Breast epithelium (tissue), 4 donors: ENCODE measurements at regions of chr4 and their contacts with region 1.

Region 1: DNA sequence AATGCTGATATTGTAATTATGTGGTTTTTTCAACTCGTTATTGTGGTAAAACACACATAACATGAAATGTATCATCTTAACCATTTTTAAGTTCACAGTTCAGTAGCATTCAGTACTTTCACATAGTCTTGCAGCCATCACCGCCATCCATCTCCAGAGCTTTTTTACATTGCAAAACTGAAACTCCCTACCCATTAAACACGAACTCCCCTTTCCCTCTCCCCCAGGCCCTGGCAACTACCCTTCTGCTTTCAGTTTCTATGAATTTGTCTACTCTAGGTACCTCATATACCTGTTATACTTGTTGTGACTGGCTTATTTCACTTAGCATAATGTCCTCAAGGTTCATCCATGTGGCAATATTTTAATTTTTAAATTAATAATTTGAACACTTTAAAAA is 380.6 kb downstream of the MAPK10 start:
- DNase-seq: no peak
- H3K4me3 ChIP-seq: no peak overlapping the region
- H3K27ac ChIP-seq: no peak overlapping the region
- H3K4me1 ChIP-seq: no peaks in the 10 kb centered on the region
- H3K27me3 ChIP-seq: no peaks in the 10 kb centered on the region
- CTCF ChIP-seq: no peak
- POLR2A ChIP-seq: no peak

Region 2: GRCh38 chr4:85603437-85604336 is 375.6 kb before region 1 on chr4:
- intact Hi-C with region 1: loop called (anchors 10 kb)
- DNase-seq: no peak
- H3K4me3 ChIP-seq: no peak overlapping the region
- H3K27ac ChIP-seq: no peak overlapping the region
- H3K4me1 ChIP-seq: no peaks in the 10 kb centered on the region
- H3K27me3 ChIP-seq: no peaks in the 10 kb centered on the region
- CTCF ChIP-seq: no peak
- POLR2A ChIP-seq: no peak

Region 3: DNA sequence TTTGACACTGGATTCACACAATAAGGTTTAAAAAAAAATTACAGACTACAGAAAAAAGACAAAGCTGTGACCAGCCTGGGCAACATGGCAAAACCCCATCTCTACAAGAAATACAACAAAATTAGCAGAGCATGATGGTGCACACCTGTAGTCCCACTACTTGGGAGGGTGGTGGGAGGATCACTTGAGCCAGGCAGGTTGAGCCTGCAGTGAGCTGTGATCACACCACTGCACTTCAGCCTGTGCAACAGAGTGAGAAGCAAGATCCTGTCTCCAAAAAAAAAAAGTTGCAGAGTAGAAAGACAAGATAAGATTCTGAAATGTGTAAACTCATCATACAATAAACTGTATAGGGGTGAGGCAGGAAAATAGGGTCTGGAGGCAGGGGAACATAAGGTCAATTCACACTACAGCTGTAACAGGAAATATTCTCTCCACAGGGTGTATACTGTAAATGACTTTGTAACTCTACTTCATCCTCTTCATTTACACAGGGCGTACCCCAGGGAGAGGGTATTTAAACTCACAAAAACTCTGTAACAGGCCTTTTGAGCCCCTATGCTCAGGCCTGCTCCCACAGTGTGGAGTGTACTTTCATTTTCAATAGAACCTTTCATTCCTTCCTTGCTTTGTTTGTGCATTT is 493.2 kb after region 1 on chr4:
- intact Hi-C with region 1: no loop called
- DNase-seq: no peak
- H3K4me3 ChIP-seq: no peak overlapping the region
- H3K27ac ChIP-seq: no peak overlapping the region
- H3K4me1 ChIP-seq: no peaks in the 10 kb centered on the region
- H3K27me3 ChIP-seq: no peaks in the 10 kb centered on the region
- CTCF ChIP-seq: no peak
- POLR2A ChIP-seq: no peak